ENCODE measurements at regions of chr10 and their contacts with region 1.

Region 1: GRCh38 chr10:33869028-33869427 is 534.6 kb upstream of the NRP1 start:
- DNase-seq: no peak
- H3K4me3 Mint-ChIP-seq: no peak overlapping the region
- H3K27ac Mint-ChIP-seq: no peak overlapping the region
- H3K4me1 Mint-ChIP-seq: no peaks in the 10 kb centered on the region
- H3K27me3 Mint-ChIP-seq: peaks cover 21% of the 10 kb centered on the region
- CTCF ChIP-seq: no peak

Region 2: DNA sequence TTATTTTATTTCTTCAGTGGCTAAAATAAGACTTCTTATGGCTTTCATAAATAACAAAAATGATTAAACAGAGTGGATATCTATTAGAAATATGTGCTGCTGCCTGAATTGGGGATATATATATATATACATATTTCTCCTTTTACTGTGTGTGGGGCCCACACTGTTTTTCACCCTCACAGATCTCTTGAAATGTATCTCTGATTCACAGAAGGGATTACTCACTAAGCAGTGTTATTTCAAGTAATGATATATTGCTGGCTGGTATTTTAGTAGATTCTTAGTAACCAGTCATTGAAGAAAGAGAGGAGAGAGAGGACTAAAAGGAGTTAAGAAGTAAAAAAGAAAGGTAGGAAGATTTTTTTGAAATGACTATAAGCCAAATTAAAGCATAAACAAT is 226.0 kb before region 1 on chr10:
- CTCF ChIA-PET with region 1: interaction called, 10 read pairs
- intact Hi-C with region 1: no loop called
- DNase-seq: no peak
- H3K4me3 Mint-ChIP-seq: no peak overlapping the region
- H3K27ac Mint-ChIP-seq: no peak overlapping the region
- H3K4me1 Mint-ChIP-seq: no peaks in the 10 kb centered on the region
- H3K27me3 Mint-ChIP-seq: no peaks in the 10 kb centered on the region
- CTCF ChIP-seq: no peak

Measured in Calu3 (cell line).